Activated T-helper 1 cell treated with anti-CD3 and anti-CD28 coated beads, Interleukin-12 subunit alpha, Interleukin-12 subunit beta, Interleukin-2, Interleukin-4 antibody, amounts not matched to agents 30 ng/mL and 10 ng/mL and 1 ng/mL, durations not matched to agents 14 hours and 24 hours and 36 hours (primary cell): ENCODE measurements at regions of chr3 and their contacts with region 1.

Region 1: GRCh38 chr3:141388823-141389621 is 20.7 kb downstream of the ZBTB38 start:
- DNase-seq: no peak
- H3K4me3 Mint-ChIP-seq: peak overlapping the region; percentile 12
- H3K27ac Mint-ChIP-seq: peak overlapping the region; percentile 57
- H3K4me1 Mint-ChIP-seq: peaks cover 17% of the 10 kb centered on the region
- H3K27me3 Mint-ChIP-seq: peaks cover 9% of the 10 kb centered on the region

Region 2: DNA sequence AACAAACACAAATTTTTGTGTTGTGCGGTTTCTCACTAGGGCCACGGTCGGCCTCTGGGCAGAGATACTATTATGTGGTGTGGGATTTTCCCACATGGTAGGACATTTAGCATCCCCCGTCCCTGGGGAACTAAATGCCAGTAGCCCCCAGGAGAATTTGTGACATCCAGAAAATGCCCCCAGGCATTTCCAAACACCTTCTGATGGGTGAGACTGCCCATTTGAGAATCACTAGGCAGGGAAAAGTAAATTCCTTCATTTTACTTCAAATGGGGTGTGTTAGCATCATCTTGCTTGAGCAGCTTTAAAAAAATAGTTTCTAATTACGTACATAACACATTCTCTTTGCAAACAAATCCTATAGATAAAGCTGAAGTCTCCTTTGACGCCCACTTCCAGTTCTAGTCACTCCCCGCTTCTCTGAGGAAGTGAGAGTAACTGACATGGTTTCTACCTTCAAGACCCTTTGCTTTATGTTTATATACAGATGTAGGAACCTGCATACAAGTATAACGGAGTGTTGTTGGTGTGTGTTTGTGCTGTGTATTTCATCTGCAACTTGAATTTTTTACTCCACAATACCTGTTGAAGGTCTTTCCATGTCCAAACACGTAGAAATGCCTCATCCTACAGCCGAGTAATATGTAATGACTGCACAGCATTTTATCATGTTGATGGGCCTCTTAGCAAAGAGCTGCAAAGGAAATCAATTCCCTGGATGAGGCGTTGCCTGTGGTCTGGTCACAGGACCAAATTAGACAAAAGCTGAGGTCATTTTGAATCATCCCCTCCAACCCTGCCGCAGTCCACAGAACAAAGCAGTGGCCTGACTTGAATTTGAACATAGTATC is 52.1 kb before region 1 on chr3:
- intact Hi-C with region 1: no loop called
- DNase-seq: no peak
- H3K4me3 Mint-ChIP-seq: no peak overlapping the region
- H3K27ac Mint-ChIP-seq: no peak overlapping the region
- H3K4me1 Mint-ChIP-seq: no peaks in the 10 kb centered on the region
- H3K27me3 Mint-ChIP-seq: peaks cover 5% of the 10 kb centered on the region

Region 3: GRCh38 chr3:141370065-141370533 is 18.9 kb before region 1 on chr3:
- intact Hi-C with region 1: loop called (anchors 2 kb)
- DNase-seq: peak; percentile 50
- H3K4me3 Mint-ChIP-seq: no peak overlapping the region
- H3K27ac Mint-ChIP-seq: no peak overlapping the region
- H3K4me1 Mint-ChIP-seq: peaks cover 27% of the 10 kb centered on the region
- H3K27me3 Mint-ChIP-seq: no peaks in the 10 kb centered on the region

Region 4: GRCh38 chr3:141402476-141403171 is 13.6 kb after region 1 on chr3:
- intact Hi-C with region 1: no loop called
- DNase-seq: peak; percentile 36
- H3K4me3 Mint-ChIP-seq: peak overlapping the region; percentile 85
- H3K27ac Mint-ChIP-seq: peak overlapping the region; percentile 62
- H3K4me1 Mint-ChIP-seq: peaks cover 31% of the 10 kb centered on the region
- H3K27me3 Mint-ChIP-seq: no peaks in the 10 kb centered on the region

Region 5: DNA sequence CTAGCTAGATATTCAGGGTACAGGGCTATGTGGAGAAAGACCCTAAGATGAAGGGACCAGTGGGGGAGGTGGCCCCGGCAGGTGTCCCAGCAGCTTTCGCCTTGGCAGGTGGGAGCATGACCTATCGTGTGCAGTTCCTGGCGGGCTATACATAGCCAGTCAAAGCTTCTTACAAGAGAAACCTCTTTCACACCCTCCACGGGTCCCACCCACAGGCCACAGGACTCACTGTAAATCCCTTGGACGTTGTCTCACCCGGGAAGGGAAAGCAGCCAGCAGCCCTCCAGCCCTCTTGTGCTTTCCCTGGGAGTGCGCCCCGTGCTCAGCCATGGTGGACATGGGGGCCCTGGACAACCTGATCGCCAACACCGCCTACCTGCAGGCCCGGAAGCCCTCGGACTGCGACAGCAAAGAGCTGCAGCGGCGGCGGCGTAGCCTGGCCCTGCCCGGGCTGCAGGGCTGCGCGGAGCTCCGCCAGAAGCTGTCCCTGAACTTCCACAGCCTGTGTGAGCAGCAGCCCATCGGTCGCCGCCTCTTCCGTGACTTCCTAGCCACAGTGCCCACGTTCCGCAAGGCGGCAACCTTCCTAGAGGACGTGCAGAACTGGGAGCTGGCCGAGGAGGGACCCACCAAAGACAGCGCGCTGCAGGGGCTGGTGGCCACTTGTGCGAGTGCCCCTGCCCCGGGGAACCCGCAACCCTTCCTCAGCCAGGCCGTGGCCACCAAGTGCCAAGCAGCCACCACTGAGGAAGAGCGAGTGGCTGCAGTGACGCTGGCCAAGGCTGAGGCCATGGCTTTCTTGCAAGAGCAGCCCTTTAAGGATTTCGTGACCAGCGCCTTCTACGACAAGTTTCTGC is 389.2 kb after region 1 on chr3:
- intact Hi-C with region 1: no loop called
- DNase-seq: no peak
- H3K4me3 Mint-ChIP-seq: no peak overlapping the region
- H3K27ac Mint-ChIP-seq: no peak overlapping the region
- H3K4me1 Mint-ChIP-seq: no peaks in the 10 kb centered on the region
- H3K27me3 Mint-ChIP-seq: peaks cover 2% of the 10 kb centered on the region